ENCODE measurements at regions of chr2 and their contacts with region 1.

Region 1: GRCh38 chr2:126634273-126634861 is 21.6 kb upstream of the GYPC start:
- DNase-seq: peak in 3 of 6 donors; percentile 19 to 66 (median 26)
- ATAC-seq: peak in 3 of 4 donors; percentile 47 to 70 (median 48)
- H3K4me3 ChIP-seq: no peak overlapping the region
- H3K27ac ChIP-seq: no peak overlapping the region
- H3K4me1 ChIP-seq: no peaks in the 10 kb centered on the region
- H3K27me3 ChIP-seq: no peaks in the 10 kb centered on the region
- CTCF ChIP-seq: peak; percentile 17 to 45 (median 26)

Region 2: DNA sequence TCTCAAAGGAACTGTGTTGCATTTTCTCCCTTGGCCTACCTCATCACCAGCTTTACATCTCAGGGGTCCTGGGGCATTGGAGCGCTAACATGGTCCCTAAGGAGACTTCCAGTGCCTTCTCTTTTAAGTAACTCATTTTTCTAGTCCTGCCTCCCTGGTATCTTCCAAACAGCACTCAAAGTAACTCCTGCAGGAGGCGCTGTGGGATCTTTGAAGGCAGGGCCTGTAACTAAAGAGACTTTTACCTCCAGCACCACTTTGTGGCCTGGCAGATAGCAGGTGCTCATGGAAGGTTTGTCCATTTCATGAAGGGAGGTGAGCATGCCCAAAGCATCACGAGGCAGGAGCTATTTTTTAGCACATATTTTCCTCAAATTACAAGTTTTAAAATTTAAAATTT is 389.4 kb before region 1 on chr2:
- intact Hi-C with region 1: loop called in 1 of 3 experiments (anchors 10 kb)
- DNase-seq: peak in 5 of 6 donors; percentile 47 to 74 (median 53)
- ATAC-seq: peak in 3 of 4 donors; percentile 63 to 91 (median 75)
- H3K4me3 ChIP-seq: no peak overlapping the region
- H3K27ac ChIP-seq: no peak overlapping the region
- H3K4me1 ChIP-seq: no peaks in the 10 kb centered on the region
- H3K27me3 ChIP-seq: peaks cover 0 to 4% (median 0%) of the 10 kb centered on the region in 4 donors
- CTCF ChIP-seq: peak; percentile 14 to 44 (median 32)

Measured in pancreas (tissue), 10 donors.